Activated CD8-positive, alpha-beta T cell treated with anti-CD3 and anti-CD28 coated beads for 36 hours (primary cell): ENCODE measurements at regions of chr17 and their contacts with region 1.

Region 1: DNA sequence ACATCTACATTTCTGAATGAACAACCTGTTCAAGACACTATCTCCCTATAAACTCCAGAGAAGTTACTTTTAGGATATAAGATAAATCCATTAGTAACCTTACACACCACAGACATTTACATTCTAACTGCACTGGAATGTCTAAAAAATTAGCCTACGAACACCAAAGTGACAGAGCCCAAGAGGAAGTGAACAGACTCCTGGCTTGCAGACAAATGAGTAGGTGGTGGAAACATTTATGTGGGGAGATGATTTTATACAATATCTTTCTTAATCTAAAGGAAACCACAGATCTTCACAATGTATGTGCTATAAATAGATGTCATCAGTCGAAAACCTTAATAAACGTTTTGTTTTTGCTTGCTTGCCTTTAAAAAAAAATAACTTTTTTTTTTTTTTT is 18.8 kb downstream of the ZNF652 start:
- DNase-seq: peak; percentile 50
- ATAC-seq: peak; percentile 31
- H3K4me3 Mint-ChIP-seq: peak overlapping the region; percentile 73
- H3K27ac Mint-ChIP-seq: peak overlapping the region; percentile 94
- H3K4me1 Mint-ChIP-seq: peaks cover 73% of the 10 kb centered on the region
- H3K27me3 Mint-ChIP-seq: no peaks in the 10 kb centered on the region
- CTCF ChIP-seq: no peak

Region 2: GRCh38 chr17:49390548-49391324 is 47.5 kb after region 1 on chr17:
- CTCF ChIA-PET with region 1: interaction called, 3 read pairs
- POLR2A ChIA-PET with region 1: interaction called, 10 read pairs
- intact Hi-C with region 1: no loop called
- DNase-seq: peak; percentile 15
- ATAC-seq: no peak
- H3K4me3 Mint-ChIP-seq: no peak overlapping the region
- H3K27ac Mint-ChIP-seq: peak overlapping the region; percentile 87
- H3K4me1 Mint-ChIP-seq: peaks cover 56% of the 10 kb centered on the region
- H3K27me3 Mint-ChIP-seq: no peaks in the 10 kb centered on the region
- CTCF ChIP-seq: no peak